ENCODE measurements at regions of chr11 and their contacts with region 1.

Region 1: DNA sequence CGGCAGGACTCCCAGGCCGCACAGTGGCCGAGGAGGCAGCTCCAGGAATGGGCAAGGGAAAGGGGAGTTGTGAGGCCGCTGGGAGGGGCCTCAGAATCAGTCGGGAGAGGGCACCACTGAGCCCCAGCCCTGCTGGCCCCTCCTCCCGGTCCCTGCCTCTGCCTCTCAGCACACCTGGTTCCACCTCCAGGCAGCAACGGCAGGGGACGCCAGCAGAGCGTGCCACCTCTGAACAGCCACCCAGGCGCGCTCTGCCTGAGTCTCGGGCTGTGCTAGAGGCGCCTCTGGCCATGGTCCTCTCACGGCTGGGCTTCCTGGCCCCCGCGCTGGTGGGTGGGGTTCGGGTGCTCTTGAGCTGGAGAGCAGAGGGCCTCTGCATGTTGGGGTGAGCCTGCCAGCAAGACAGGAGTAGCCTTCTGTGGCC is 33.0 kb downstream of the MOB2 start:
- DNase-seq: peak; percentile 89
- ATAC-seq: peak; percentile 95
- H3K4me3 Mint-ChIP-seq: no peak overlapping the region
- H3K27ac Mint-ChIP-seq: no peak overlapping the region
- H3K4me1 Mint-ChIP-seq: no peaks in the 10 kb centered on the region
- H3K27me3 Mint-ChIP-seq: no peaks in the 10 kb centered on the region
- CTCF ChIP-seq: 0 out of 2 replicates have a peak, but pooled peaks have one; percentile 44

Region 2: DNA sequence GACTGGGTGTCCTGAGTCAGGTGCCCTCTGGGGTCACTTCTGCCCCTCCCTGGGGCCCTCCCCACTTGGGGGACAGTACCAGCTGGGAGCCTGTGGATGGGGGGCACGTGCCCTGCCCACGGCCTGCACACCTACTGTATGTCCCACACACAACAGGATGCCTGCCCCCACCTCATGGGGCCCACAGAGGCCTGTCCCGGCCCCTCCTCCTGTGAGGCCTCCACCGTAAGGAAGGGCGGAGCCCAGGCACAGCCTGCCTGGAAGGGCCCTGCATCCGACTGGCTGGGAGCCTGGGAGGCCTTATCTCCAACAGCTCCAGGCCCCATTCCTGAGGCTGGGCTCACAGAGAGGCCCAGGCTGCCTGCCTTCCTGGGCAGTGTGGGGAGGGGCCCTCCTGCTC is 16.1 kb before region 1 on chr11:
- CTCF ChIA-PET with region 1: interaction called, 15 read pairs
- POLR2A ChIA-PET with region 1: no interaction called
- DNase-seq: no peak
- ATAC-seq: no peak
- H3K4me3 Mint-ChIP-seq: no peak overlapping the region
- H3K27ac Mint-ChIP-seq: no peak overlapping the region
- H3K4me1 Mint-ChIP-seq: no peaks in the 10 kb centered on the region
- H3K27me3 Mint-ChIP-seq: no peaks in the 10 kb centered on the region
- CTCF ChIP-seq: no peak

Region 3: GRCh38 chr11:1515082-1516060 is 61.7 kb after region 1 on chr11:
- CTCF ChIA-PET with region 1: interaction called, 10 read pairs
- POLR2A ChIA-PET with region 1: no interaction called
- DNase-seq: peak; percentile 92
- ATAC-seq: peak; percentile 90
- H3K4me3 Mint-ChIP-seq: no peak overlapping the region
- H3K27ac Mint-ChIP-seq: no peak overlapping the region
- H3K4me1 Mint-ChIP-seq: peaks cover 21% of the 10 kb centered on the region
- H3K27me3 Mint-ChIP-seq: no peaks in the 10 kb centered on the region
- CTCF ChIP-seq: peak; percentile 85

Measured in WTC11 (cell line).